Right ventricle myocardium inferior (tissue), 1 donor: ENCODE measurements at regions of chrX and their contacts with region 1.

Region 1: GRCh38 chrX:46903458-46904242 is 8.6 kb upstream of the JADE3 start:
- DNase-seq: peak; percentile 82
- ATAC-seq: peak; percentile 98

Region 2: GRCh38 chrX:45749375-45749774 is 1154.3 kb before region 1 on chrX:
- intact Hi-C with region 1: no loop called
- DNase-seq: no peak
- ATAC-seq: no peak

Region 3: GRCh38 chrX:47030339-47030738 is 126.7 kb after region 1 on chrX:
- intact Hi-C with region 1: loop called (anchors 1 kb)
- DNase-seq: no peak
- ATAC-seq: no peak

Region 4: DNA sequence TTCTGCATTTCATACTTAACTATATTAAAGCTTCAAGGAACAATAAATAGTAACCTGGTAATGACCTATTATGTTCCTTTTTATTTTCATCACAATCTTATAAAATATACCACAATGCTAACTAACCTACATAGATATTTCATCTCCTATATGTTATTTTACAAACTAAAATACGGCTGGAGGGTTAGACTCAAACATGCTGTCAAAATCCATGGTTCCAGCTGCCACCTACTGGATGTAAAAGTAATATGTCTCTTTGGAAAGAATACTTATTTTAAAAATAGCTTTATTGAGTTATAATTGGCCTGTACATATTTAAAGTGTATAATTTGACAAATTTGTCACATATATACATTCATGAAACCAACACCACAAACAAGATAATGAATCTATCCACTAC is 189.6 kb after region 1 on chrX:
- intact Hi-C with region 1: loop called (anchors 5 kb)
- DNase-seq: no peak
- ATAC-seq: no peak